Activated CD4-positive, alpha-beta T cell treated with anti-CD3 and anti-CD28 coated beads for 36 hours (primary cell): ENCODE measurements at regions of chr18 and their contacts with region 1.

Region 1: DNA sequence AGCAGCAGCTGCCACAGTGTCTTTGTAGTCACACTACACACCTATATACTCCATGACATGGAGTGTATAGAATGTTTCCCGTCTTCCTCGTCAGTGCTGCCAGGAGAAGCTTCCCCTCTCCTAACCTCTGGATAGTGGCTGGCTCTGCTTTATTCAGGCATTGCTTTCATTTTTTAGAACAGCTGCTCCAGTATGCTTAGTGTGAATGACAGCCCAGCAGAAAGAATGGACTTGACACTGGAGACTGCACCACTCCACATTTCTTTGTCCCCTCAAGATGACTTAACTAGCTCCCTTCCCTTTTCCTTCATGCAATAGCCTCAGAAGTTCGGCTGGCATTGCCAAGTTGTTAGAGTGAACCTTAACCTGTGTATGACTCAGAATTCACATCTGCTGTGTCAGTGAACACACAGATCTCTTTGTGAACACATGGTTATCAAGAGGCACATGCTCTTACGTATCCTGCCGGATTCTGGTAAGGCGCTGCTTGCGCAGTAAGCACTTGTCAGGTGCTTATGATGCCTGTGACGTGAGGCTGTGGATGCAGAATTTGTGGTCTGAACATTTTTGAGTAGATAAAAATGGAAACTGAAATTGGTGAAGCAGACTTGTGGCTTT is 73.9 kb downstream of the NEDD4L start:
- DNase-seq: peak; percentile 65
- ATAC-seq: peak; percentile 86
- H3K4me3 Mint-ChIP-seq: no peak overlapping the region
- H3K27ac Mint-ChIP-seq: no peak overlapping the region
- H3K4me1 Mint-ChIP-seq: peaks cover 5% of the 10 kb centered on the region
- H3K27me3 Mint-ChIP-seq: peaks cover 2% of the 10 kb centered on the region

Region 2: DNA sequence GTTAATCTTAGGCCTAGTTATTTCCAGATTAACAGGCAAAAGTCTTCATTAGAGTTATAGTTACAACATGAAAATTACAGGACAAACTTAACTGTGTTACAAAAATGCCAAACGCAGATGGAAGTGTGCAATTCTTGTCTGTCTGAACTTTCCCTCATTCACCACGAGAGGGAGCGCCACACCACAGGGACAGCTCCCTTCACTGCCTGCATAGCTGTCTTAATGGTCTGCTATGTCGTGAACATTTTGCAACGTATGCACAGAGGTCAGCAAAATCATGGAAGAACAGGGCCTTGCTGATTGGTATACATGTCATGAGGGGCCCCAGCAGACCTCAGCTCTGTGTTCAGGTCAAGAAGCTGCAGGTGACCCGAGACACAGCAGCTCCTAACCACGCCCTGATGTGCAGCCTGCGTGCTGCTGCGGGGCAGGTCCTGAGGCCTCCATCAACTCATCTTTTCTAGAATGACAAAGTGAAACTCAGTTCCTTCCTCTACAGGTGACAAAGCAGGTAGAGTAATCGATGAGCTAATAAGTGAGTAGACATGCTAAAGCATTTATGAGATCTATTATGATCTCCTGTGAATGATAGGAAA is 236.0 kb before region 1 on chr18:
- CTCF ChIA-PET with region 1: interaction called, 31 read pairs
- POLR2A ChIA-PET with region 1: no interaction called
- intact Hi-C with region 1: loop called (anchors 1 kb)
- DNase-seq: peak; percentile 74
- ATAC-seq: peak; percentile 90
- H3K4me3 Mint-ChIP-seq: no peak overlapping the region
- H3K27ac Mint-ChIP-seq: no peak overlapping the region
- H3K4me1 Mint-ChIP-seq: peaks cover 2% of the 10 kb centered on the region
- H3K27me3 Mint-ChIP-seq: peaks cover 13% of the 10 kb centered on the region

Region 3: GRCh38 chr18:57959278-57959677 is 158.6 kb before region 1 on chr18:
- CTCF ChIA-PET with region 1: interaction called, 6 read pairs
- POLR2A ChIA-PET with region 1: no interaction called
- intact Hi-C with region 1: loop called (anchors 1 to 5 kb)
- DNase-seq: peak; percentile 25
- ATAC-seq: peak; percentile 58
- H3K4me3 Mint-ChIP-seq: no peak overlapping the region
- H3K27ac Mint-ChIP-seq: no peak overlapping the region
- H3K4me1 Mint-ChIP-seq: no peaks in the 10 kb centered on the region
- H3K27me3 Mint-ChIP-seq: peaks cover 22% of the 10 kb centered on the region

Region 4: DNA sequence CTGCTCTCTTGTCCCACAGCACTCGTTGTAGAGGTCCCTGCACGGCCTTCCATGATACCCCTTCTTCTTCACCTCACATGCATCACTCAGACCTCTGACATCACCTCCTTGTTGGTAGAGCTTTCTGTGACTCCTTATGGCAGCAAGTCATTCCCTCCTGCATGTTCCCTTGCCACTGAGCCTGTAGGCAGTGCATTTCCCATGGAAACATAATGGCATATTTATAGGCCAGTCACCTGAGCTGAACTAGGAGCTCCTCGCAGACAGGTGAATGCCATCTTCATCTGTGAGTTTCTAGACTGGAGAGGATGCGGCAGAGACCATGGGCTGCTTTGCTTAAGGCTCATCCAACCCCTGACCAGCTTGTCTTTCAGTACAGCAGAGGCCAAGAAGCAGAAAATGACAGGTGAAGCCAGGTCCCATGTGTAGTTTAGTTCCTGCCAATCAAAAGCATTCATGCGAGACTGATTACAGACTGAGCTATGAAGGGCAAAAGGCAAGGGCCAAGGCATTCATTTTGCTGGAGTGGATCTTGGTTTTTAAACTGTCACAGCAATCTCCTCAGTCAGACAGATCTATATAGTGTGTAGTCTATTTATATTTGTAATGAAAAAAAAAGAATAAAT is 133.3 kb before region 1 on chr18:
- CTCF ChIA-PET with region 1: no interaction called
- POLR2A ChIA-PET with region 1: no interaction called
- intact Hi-C with region 1: no loop called
- DNase-seq: no peak
- ATAC-seq: no peak
- H3K4me3 Mint-ChIP-seq: no peak overlapping the region
- H3K27ac Mint-ChIP-seq: no peak overlapping the region
- H3K4me1 Mint-ChIP-seq: no peaks in the 10 kb centered on the region
- H3K27me3 Mint-ChIP-seq: peaks cover 4% of the 10 kb centered on the region

Region 5: GRCh38 chr18:58166278-58166844 is 48.5 kb after region 1 on chr18:
- CTCF ChIA-PET with region 1: no interaction called
- POLR2A ChIA-PET with region 1: no interaction called
- intact Hi-C with region 1: loop called in 1 of 2 experiments (anchors 1 kb)
- DNase-seq: no peak
- ATAC-seq: no peak
- H3K4me3 Mint-ChIP-seq: no peak overlapping the region
- H3K27ac Mint-ChIP-seq: no peak overlapping the region
- H3K4me1 Mint-ChIP-seq: no peaks in the 10 kb centered on the region
- H3K27me3 Mint-ChIP-seq: peaks cover 5% of the 10 kb centered on the region

Region 6: GRCh38 chr18:58819051-58819450 is 701.2 kb after region 1 on chr18:
- CTCF ChIA-PET with region 1: no interaction called
- POLR2A ChIA-PET with region 1: no interaction called
- intact Hi-C with region 1: no loop called
- DNase-seq: peak; percentile 17
- ATAC-seq: no peak
- H3K4me3 Mint-ChIP-seq: no peak overlapping the region
- H3K27ac Mint-ChIP-seq: no peak overlapping the region
- H3K4me1 Mint-ChIP-seq: peaks cover 10% of the 10 kb centered on the region
- H3K27me3 Mint-ChIP-seq: peaks cover 45% of the 10 kb centered on the region